MCF 10A (cell line): ENCODE measurements at regions of chr16 and their contacts with region 1.

Region 1: DNA sequence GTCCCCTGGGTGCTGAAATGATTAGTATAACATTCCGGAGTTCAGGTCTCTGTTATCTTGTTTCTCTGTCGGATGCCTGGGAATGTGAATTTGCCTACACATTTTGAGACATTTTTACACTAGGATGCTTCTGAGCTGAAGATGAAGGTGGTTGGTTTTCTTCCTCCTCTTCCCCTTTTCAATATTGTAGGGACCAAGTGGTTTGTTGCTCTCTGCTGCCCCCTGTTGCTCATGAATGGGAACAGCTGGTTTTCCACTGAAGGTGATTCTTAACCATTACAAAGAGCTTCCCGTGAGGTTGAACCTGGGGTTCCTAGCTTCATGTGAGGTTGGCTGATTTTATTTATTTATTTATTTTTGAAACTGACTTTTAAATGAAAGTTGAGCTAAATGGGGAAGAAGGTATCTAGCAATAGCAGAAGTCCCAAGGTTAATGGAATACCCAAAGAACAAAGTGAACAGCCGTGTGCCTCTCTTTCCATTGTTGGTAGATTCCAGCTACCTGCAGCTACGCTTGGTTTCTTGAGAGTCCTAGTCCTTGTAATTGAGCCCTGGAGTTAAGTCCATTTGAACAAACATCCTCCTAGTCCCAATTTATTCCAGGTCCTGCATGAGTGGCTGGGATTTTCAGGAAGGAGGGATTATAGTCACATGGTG is 983.9 kb upstream of the EEF2KMT start:
- DNase-seq: peak; percentile 0
- H3K4me3 Mint-ChIP-seq: no peak overlapping the region
- H3K27ac Mint-ChIP-seq: no peak overlapping the region
- H3K4me1 Mint-ChIP-seq: no peaks in the 10 kb centered on the region
- H3K27me3 Mint-ChIP-seq: no peaks in the 10 kb centered on the region
- CTCF ChIP-seq: peak; percentile 29

Region 2: DNA sequence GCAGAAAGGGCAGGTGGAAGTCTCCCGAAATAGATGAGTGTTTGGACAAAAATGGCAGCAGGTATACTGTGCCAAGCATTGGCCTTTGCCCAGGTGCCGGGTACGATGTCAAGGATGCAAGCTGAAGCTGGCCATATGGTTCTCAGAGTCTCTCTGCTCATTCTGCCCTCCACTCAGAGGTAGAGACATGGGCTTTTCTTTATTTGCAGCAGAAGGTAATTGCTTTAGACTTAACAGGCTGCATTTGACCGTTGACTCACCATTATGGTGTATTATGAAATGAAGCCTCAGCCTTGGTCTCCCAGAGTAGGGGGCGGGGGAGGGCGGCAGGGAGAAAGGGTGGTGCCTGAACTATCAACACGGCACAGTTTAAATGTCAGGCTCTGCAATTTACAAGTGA is 14.8 kb before region 1 on chr16:
- CTCF ChIA-PET with region 1: interaction called, 10 read pairs
- POLR2A ChIA-PET with region 1: no interaction called
- intact Hi-C with region 1: no loop called
- DNase-seq: no peak
- H3K4me3 Mint-ChIP-seq: no peak overlapping the region
- H3K27ac Mint-ChIP-seq: no peak overlapping the region
- H3K4me1 Mint-ChIP-seq: no peaks in the 10 kb centered on the region
- H3K27me3 Mint-ChIP-seq: no peaks in the 10 kb centered on the region
- CTCF ChIP-seq: no peak

Region 3: GRCh38 chr16:6177616-6178180 is 96.2 kb after region 1 on chr16:
- CTCF ChIA-PET with region 1: no interaction called
- POLR2A ChIA-PET with region 1: no interaction called
- intact Hi-C with region 1: no loop called
- DNase-seq: no peak
- H3K4me3 Mint-ChIP-seq: no peak overlapping the region
- H3K27ac Mint-ChIP-seq: no peak overlapping the region
- H3K4me1 Mint-ChIP-seq: no peaks in the 10 kb centered on the region
- H3K27me3 Mint-ChIP-seq: no peaks in the 10 kb centered on the region
- CTCF ChIP-seq: no peak